ENCODE measurements at regions of chr12 and their contacts with region 1.

Region 1: GRCh38 chr12:93778306-93778705 is 101.1 kb downstream of the CRADD start:
- DNase-seq: peak; percentile 53 to 69 (median 59)
- H3K4me3 ChIP-seq: no peak overlapping the region
- H3K27ac ChIP-seq: peak overlapping the region; percentile 11 to 68
- H3K4me1 ChIP-seq: peaks cover 16% of the 10 kb centered on the region
- H3K27me3 ChIP-seq: no peaks in the 10 kb centered on the region
- CTCF ChIP-seq: no peak
- EP300 ChIP-seq: no peak
- POLR2A ChIP-seq: no peak

Region 2: DNA sequence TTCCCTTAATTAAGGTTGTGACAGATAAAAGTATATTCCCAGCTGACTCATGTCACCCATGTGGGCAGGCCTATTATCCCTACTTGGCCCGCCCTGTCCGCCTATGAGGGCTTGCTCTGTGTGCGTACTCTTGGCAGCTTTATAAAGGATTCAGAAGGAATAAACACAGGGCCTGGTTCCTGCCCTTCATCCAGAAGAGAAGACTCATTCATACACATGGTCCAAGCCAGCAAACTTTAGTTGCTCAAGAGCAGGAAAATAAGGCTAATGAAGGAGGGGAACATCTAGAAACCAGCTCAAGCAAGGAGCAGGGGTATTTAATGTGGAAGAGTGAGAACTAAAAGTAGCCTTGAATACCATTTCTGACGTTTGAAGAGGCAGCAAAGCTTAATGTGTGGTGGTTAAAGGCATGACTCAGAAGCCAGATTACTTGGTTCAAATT is 40.8 kb after region 1 on chr12:
- intact Hi-C with region 1: loop called in 1 of 4 experiments (anchors 5 kb)
- DNase-seq: peak; percentile 69 to 87 (median 77)
- H3K4me3 ChIP-seq: no peak overlapping the region
- H3K27ac ChIP-seq: peak overlapping the region in 1 of 2 donors; percentile 65
- H3K4me1 ChIP-seq: peaks cover 17% of the 10 kb centered on the region
- H3K27me3 ChIP-seq: no peaks in the 10 kb centered on the region
- CTCF ChIP-seq: no peak
- EP300 ChIP-seq: peak; percentile 36
- POLR2A ChIP-seq: no peak

Region 3: GRCh38 chr12:93868771-93869170 is 90.5 kb after region 1 on chr12:
- intact Hi-C with region 1: no loop called
- DNase-seq: no peak
- H3K4me3 ChIP-seq: no peak overlapping the region
- H3K27ac ChIP-seq: no peak overlapping the region
- H3K4me1 ChIP-seq: no peaks in the 10 kb centered on the region
- H3K27me3 ChIP-seq: no peaks in the 10 kb centered on the region
- CTCF ChIP-seq: no peak
- EP300 ChIP-seq: no peak
- POLR2A ChIP-seq: no peak

Region 4: DNA sequence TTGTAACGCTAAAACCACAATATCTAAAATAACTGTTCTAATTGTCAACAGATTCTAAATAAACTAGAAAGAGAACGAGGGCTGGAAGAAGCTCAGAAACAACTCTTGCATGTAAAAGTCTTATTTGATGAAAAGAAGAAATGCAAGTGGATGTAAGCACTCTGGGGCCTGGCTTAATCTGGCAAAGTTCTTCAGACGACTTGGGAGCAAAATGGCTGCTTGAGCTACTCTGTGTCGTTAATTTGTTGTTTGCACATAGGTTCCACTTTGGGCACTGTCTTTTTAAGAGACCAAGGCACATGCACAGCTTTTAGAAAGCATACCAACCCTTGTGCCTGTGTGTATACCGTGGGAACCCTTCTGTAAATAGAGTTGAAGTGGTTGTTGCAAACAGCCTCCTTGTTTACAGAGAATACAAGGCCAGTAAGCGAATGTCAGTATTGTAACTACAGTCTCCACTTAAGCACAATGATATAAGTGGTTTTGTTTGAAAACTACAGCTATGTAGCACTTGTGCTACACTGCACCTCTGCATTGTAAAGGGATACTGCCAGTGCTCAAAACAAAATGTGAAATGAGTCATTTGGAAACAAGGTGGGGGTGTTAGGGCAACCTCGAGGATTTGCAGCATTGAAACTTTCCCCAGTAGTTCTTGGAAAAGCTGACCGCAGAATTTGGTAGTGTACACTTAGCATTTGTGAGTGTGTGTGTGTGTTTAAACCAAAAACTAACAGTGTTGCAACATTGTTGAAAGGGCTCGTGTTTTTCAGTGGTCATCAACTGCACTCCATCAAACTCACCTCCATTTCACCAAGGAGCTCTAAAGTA is 527.0 kb after region 1 on chr12:
- intact Hi-C with region 1: no loop called
- DNase-seq: no peak
- H3K4me3 ChIP-seq: no peak overlapping the region
- H3K27ac ChIP-seq: peak overlapping the region in 1 of 2 donors; percentile 11
- H3K4me1 ChIP-seq: peaks cover 5% of the 10 kb centered on the region
- H3K27me3 ChIP-seq: no peaks in the 10 kb centered on the region
- CTCF ChIP-seq: no peak
- EP300 ChIP-seq: no peak
- POLR2A ChIP-seq: no peak

Measured in ovary (tissue), 10 donors.